Activated CD8-positive, alpha-beta memory T cell treated with anti-CD3 and anti-CD28 coated beads, Interleukin-2, amount 10 ng/mL, durations not matched to agents 7 days and 5 days (primary cell): ENCODE measurements at regions of chr16 and their contacts with region 1.

Region 1: GRCh38 chr16:28140788-28141618 is 70.8 kb downstream of the XPO6 start:
- DNase-seq: peak; percentile 92
- ATAC-seq: peak; percentile 73
- H3K4me3 Mint-ChIP-seq: peak overlapping the region; percentile 73
- H3K27ac Mint-ChIP-seq: peak overlapping the region; percentile 99
- H3K4me1 Mint-ChIP-seq: peaks cover 73% of the 10 kb centered on the region
- H3K27me3 Mint-ChIP-seq: no peaks in the 10 kb centered on the region

Region 2: GRCh38 chr16:28188085-28188916 is 47.3 kb after region 1 on chr16:
- CTCF ChIA-PET with region 1: interaction called, 21 read pairs
- DNase-seq: no peak
- ATAC-seq: no peak
- H3K4me3 Mint-ChIP-seq: peak overlapping the region; percentile 59
- H3K27ac Mint-ChIP-seq: peak overlapping the region; percentile 94
- H3K4me1 Mint-ChIP-seq: peaks cover 87% of the 10 kb centered on the region
- H3K27me3 Mint-ChIP-seq: no peaks in the 10 kb centered on the region

Region 3: DNA sequence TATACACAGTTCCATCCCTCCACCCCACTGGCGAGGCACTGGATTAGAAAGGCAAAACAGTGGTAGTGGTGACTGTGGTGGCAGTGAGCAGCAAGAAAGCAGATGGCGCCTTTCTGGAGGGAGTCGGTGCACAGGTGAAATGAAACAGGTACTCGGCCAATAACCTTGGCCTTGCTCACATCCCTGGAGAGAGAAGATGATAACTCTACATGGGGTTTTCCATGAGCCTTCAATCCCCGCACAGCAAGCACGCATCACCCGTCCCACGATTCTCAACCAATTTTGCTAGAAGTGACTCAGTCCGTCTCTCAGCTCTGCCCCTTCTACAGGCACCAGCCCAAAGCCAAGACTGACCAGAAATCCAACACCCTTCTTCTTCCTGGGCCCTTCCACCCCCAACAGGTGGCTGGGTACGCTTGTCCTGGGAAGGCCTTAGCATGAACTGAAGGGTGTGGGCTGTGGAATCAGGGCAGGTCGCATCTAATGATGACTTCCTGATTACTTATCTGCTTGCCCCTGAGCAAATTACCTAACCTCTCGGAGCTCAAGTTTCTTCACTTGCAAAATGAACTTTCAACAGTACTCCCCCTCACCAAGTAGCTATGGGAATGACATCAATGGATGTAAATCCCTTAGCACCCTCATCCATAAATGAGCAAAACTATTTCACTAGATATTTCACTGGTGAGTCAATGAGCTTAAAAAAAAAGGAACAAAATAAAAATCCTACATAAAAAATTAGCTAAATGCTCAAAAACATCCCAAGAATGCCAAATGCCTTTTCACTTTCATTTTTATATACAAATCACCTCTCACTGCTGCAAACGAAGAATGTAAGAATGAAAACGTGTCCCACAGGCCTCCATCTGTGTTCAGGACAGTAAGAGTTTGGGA is 52.8 kb after region 1 on chr16:
- CTCF ChIA-PET with region 1: interaction called, 21 read pairs
- DNase-seq: peak; percentile 64
- ATAC-seq: peak; percentile 46
- H3K4me3 Mint-ChIP-seq: peak overlapping the region; percentile 74
- H3K27ac Mint-ChIP-seq: peak overlapping the region; percentile 98
- H3K4me1 Mint-ChIP-seq: peaks cover 77% of the 10 kb centered on the region
- H3K27me3 Mint-ChIP-seq: no peaks in the 10 kb centered on the region

Region 4: GRCh38 chr16:28211712-28212534 is 70.9 kb after region 1 on chr16 and contains the start of gene XPO6:
- CTCF ChIA-PET with region 1: interaction called, 64 read pairs
- DNase-seq: peak; percentile 98
- ATAC-seq: peak; percentile 82
- H3K4me3 Mint-ChIP-seq: peak within 1 kb of the TSS; percentile 93
- H3K27ac Mint-ChIP-seq: peak within 1 kb of the TSS; percentile 94
- H3K4me1 Mint-ChIP-seq: peaks cover 37% of the 10 kb centered on the region
- H3K27me3 Mint-ChIP-seq: no peaks in the 10 kb centered on the region
- total RNA-seq, gene XPO6: 204 to 267 TPM

Region 5: DNA sequence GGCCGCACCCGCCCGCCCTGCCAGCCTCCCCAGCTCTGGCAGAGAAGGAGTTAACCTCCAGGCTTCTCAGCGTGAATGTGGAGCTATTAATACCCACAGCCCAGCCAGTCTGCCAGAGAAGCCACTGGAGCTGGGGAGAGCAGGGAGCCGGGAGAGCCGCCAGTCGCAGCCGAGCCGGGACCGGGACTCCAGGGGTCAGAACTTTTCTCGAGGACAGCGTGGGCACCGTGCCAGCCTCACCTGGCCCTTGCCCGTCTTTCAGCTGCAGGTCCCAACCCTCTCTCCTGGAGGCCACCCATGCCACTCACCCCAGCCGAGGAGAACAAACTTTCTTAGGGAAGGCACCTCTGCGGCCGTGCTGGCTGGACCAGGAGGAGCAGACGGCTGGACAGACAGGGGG is 117.6 kb after region 1 on chr16:
- CTCF ChIA-PET with region 1: no interaction called
- DNase-seq: no peak
- ATAC-seq: no peak
- H3K4me3 Mint-ChIP-seq: no peak overlapping the region
- H3K27ac Mint-ChIP-seq: no peak overlapping the region
- H3K4me1 Mint-ChIP-seq: peaks cover 22% of the 10 kb centered on the region
- H3K27me3 Mint-ChIP-seq: peaks cover 21% of the 10 kb centered on the region